Activated T-helper 1 cell treated with anti-CD3 and anti-CD28 coated beads, Interleukin-12 subunit alpha, Interleukin-12 subunit beta, Interleukin-2, Interleukin-4 antibody, amounts not matched to agents 30 ng/mL and 10 ng/mL and 1 ng/mL, durations not matched to agents 14 hours and 24 hours and 36 hours (primary cell): ENCODE measurements at regions of chr4 and their contacts with region 1.

Region 1: GRCh38 chr4:107719922-107720722 is at the start of gene PAPSS1:
- DNase-seq: peak; percentile 93
- H3K4me3 Mint-ChIP-seq: peak within 1 kb of the TSS; percentile 94
- H3K27ac Mint-ChIP-seq: peak within 1 kb of the TSS; percentile 90
- H3K4me1 Mint-ChIP-seq: peaks cover 33% of the 10 kb centered on the region
- H3K27me3 Mint-ChIP-seq: no peaks in the 10 kb centered on the region
- total RNA-seq, gene PAPSS1: 35.0 and 36.0 TPM in 2 replicates

Region 2: GRCh38 chr4:107559653-107560052 is 160.5 kb before region 1 on chr4:
- intact Hi-C with region 1: loop called (anchors 5 kb)
- DNase-seq: no peak
- H3K4me3 Mint-ChIP-seq: no peak overlapping the region
- H3K27ac Mint-ChIP-seq: no peak overlapping the region
- H3K4me1 Mint-ChIP-seq: no peaks in the 10 kb centered on the region
- H3K27me3 Mint-ChIP-seq: peaks cover 6% of the 10 kb centered on the region

Region 3: DNA sequence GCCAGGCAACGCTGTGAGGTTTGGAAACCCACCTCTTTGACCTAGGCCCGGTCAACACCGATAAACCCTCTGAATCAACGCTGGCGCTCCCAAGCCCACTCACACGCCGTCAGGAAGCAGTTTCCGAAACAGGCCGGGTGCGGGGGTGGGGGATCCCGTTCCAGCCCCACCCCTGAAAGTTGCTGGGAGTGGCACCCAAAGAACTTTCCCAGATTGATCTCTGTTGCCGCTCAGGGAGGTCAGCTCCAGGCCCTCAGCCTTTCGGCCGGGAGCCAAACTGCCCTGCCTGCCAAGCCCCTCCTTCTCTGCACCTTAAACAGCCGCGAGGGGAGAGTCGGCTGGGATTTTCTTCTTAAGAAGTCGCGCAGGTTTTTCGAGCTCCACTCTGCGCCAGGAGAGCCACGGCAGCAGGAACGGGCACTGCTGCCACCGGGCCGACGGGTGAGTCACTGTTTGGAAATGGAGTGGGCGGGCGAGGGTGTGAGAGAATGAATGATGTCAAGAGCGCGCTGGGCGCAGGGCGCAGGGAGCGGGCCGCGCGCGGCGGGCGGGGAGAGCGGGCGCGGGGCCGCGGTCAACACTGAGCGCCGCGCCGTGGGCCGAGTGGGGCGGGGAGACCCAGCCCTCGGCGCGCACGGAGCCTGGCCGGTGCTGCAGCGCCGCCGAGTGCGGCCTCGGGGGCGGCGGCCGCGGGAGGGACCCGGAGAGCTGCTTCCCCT is 104.4 kb after region 1 on chr4 and contains the start of gene SGMS2:
- intact Hi-C with region 1: loop called (anchors 1 kb)
- DNase-seq: no peak
- H3K4me3 Mint-ChIP-seq: peak within 1 kb of the TSS; percentile 85
- H3K27ac Mint-ChIP-seq: peak within 1 kb of the TSS; percentile 70
- H3K4me1 Mint-ChIP-seq: peaks cover 9% of the 10 kb centered on the region
- H3K27me3 Mint-ChIP-seq: peaks cover 55% of the 10 kb centered on the region
- total RNA-seq, gene SGMS2: 0.64 and 1.1 TPM in 2 replicates

Region 4: DNA sequence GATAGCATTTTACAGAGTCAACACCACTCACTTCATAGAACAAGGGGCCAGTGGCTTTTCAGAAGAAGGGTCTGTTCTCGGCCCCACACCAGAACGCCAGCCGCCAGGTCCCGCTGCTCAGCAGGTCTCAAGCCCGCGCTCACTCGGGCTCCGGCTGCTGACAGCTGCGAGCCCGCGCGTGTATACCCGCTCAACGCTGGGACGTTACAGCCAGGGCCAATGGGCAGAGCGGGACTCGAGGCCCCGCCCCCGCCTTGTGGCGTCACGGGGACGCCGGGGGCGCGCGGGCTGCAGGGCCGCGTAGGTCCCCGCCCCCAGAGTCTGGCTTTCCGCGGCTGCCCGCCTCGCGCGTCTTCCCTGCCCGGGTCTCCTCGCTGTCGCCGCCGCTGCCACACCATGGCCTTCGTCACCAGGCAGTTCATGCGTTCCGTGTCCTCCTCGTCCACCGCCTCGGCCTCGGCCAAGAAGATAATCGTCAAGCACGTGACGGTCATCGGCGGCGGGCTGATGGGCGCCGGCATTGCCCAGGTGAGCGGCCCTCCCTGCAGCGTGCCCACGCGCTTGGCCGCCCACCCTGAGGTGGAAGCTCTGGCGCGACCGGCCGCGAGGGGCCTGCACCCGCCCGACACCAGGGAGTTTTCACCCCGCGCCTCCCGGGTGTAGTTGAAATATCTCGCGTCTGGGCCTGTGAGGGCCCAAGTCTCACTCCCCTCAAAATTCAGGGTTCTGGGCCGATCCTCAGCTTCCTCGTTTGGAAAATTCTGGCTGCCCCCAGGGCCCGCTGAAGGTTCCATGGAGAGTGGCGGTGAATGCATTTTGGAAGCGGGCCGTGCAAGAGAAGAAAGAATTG is 269.6 kb after region 1 on chr4 and contains the start of gene HADH:
- intact Hi-C with region 1: loop called (anchors 1 kb)
- DNase-seq: peak; percentile 95
- H3K4me3 Mint-ChIP-seq: peak within 1 kb of the TSS; percentile 97
- H3K27ac Mint-ChIP-seq: peak within 1 kb of the TSS; percentile 96
- H3K4me1 Mint-ChIP-seq: peaks cover 57% of the 10 kb centered on the region
- H3K27me3 Mint-ChIP-seq: no peaks in the 10 kb centered on the region
- total RNA-seq, gene HADH: 33.9 and 36.8 TPM in 2 replicates

Region 5: GRCh38 chr4:108650212-108651013 is 930.3 kb after region 1 on chr4 and contains the start of gene OSTC:
- intact Hi-C with region 1: loop called (anchors 1 kb)
- DNase-seq: peak; percentile 90
- H3K4me3 Mint-ChIP-seq: peak within 1 kb of the TSS; percentile 99
- H3K27ac Mint-ChIP-seq: peak within 1 kb of the TSS; percentile 93
- H3K4me1 Mint-ChIP-seq: peaks cover 39% of the 10 kb centered on the region
- H3K27me3 Mint-ChIP-seq: no peaks in the 10 kb centered on the region
- total RNA-seq, gene OSTC: 96.1 and 96.7 TPM in 2 replicates